Ascending aorta (tissue), 2 donors: ENCODE measurements at regions of chr3 and their contacts with region 1.

Region 1: GRCh38 chr3:70358978-70359580 is 46.6 kb upstream of the MDFIC2 start:
- DNase-seq: no peak
- H3K4me3 ChIP-seq: no peak overlapping the region
- H3K27ac ChIP-seq: no peak overlapping the region
- H3K4me1 ChIP-seq: no peaks in the 10 kb centered on the region
- H3K27me3 ChIP-seq: no peaks in the 10 kb centered on the region
- CTCF ChIP-seq: peak; percentile 42 to 76 (median 60)

Region 2: DNA sequence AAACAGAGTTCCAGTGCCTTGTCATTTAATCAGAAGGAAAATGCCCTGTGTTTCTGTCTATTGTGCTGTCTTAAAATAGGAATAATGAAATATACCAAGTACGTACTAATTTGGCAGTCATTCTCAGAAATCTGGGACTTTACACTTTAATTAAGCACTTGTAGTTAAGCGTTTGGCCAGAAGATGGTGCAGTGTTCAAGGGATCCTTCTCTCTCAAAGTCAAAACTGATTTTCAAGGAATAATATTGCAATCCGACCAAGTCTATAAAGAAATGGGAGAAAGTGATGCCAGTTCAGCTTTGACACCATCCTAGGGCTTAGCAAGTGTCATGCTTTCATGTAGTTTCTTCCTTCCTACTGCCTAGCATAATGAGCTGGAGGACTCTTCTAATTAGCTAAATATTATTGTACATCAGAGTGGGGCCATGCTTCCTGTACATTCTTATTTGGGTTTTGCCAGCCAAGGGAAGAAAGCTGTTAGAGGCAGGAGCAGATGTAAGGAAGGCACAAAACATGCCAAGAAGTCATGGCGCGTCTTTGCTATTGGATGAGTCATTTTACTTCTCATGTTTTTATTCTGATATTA is 294.8 kb before region 1 on chr3:
- intact Hi-C with region 1: loop called (anchors 1 kb)
- DNase-seq: no peak
- H3K4me3 ChIP-seq: no peak overlapping the region
- H3K27ac ChIP-seq: peak overlapping the region; percentile 66 to 90
- H3K4me1 ChIP-seq: peaks cover 0 to 30% of the 10 kb centered on the region in 2 donors
- H3K27me3 ChIP-seq: no peaks in the 10 kb centered on the region
- CTCF ChIP-seq: peak; percentile 63 to 78 (median 74)

Region 3: DNA sequence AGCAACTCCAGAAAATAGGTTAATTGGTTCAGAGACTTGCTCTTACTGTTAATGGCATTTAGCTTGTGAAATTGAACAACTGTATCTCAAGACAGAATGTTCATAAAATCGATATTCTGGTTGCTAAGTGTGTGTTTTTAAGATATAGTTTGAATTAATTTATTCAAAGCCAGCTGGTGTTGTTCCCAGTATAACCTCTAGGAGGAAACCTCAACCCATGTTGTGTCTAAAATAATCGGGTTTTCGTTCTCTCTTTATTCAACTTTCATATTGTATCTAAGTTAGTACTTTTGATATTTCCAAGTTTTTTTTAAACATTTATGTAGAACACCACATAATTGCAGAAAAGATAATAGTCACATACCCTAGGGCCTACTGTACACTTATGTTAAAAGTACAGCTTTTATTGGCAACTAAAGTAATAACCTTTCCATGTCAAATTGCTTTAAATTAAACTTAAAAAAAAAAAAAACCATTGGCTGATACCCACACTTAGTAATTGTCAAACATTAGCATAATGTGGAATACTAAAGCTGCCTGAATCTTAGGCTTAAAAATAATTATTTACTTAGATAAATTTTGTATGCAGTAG is 268.7 kb before region 1 on chr3:
- intact Hi-C with region 1: loop called (anchors 1 kb)
- DNase-seq: no peak
- H3K4me3 ChIP-seq: peak overlapping the region in 1 of 2 donors; percentile 24
- H3K27ac ChIP-seq: no peak overlapping the region
- H3K4me1 ChIP-seq: peaks cover 0 to 8% of the 10 kb centered on the region in 2 donors
- H3K27me3 ChIP-seq: no peaks in the 10 kb centered on the region
- CTCF ChIP-seq: peak; percentile 56 to 73 (median 68)

Region 4: DNA sequence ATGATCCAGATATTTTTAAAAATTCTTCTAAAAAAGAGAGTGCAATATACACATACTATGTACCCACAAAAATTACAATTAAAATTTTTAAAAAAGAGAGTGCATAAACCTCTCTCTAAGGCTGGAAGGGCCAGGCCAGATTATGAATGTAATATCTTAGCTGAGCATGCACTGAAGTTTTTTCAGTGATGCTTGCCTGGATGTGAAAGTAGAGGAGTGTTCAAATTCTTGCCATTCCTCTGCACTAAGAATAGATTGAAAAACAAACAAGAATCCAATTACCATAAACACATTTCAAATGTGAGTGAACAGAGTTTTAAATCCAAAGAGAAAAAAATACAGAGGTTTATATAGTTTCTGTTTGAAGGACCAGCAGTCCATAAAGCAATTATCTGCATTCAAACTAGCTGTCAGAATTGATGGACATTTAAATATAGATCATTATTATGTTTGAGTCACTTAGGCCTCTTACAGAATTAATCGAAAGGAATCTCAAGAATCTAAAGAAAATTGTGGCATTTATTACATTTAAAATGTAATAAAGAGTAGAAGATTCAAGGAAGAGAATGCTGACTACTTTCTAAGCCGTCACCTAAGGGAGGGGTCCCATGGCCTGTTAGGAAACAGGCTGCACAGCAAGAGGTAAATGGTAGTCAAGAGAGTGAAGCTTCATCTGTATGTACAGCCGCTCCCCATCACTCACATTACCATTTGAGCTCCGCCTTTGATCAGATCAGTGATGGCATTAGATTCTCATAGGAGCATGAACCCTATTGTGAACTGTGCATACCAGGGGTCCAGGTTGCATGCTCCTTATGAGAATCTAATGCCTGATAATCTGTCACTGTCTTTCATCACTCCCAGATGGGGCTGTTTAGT is 112.6 kb after region 1 on chr3:
- intact Hi-C with region 1: no loop called
- DNase-seq: no peak
- H3K4me3 ChIP-seq: no peak overlapping the region
- H3K27ac ChIP-seq: no peak overlapping the region
- H3K4me1 ChIP-seq: no peaks in the 10 kb centered on the region
- H3K27me3 ChIP-seq: no peaks in the 10 kb centered on the region
- CTCF ChIP-seq: no peak

Region 5: DNA sequence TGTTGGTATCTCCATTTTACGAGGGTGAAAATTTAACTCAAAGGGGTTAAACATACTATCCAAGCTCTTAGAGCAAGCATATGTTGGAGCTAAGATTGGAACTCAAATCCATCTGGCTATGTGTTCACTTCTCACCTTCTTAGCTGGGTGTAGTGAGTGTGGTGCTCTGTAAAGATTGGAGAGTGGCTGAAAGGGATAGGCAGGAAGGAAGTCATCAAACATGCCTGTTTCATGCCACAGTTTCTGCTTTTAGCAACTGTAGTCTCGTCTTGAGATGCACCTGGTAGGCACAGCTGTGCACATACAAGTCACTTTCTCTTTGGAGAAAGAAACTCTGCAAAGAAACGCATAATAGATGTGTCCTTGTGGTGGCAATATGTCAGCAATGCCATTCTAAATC is 142.5 kb after region 1 on chr3:
- intact Hi-C with region 1: no loop called
- DNase-seq: no peak
- H3K4me3 ChIP-seq: no peak overlapping the region
- H3K27ac ChIP-seq: no peak overlapping the region
- H3K4me1 ChIP-seq: no peaks in the 10 kb centered on the region
- H3K27me3 ChIP-seq: no peaks in the 10 kb centered on the region
- CTCF ChIP-seq: no peak